Posterior vena cava (tissue), 2 donors: ENCODE measurements at regions of chrX and their contacts with region 1.

Region 1: GRCh38 chrX:17590892-17591740 is 146.2 kb upstream of the SCML1 start:
- DNase-seq: no peak

Region 2: DNA sequence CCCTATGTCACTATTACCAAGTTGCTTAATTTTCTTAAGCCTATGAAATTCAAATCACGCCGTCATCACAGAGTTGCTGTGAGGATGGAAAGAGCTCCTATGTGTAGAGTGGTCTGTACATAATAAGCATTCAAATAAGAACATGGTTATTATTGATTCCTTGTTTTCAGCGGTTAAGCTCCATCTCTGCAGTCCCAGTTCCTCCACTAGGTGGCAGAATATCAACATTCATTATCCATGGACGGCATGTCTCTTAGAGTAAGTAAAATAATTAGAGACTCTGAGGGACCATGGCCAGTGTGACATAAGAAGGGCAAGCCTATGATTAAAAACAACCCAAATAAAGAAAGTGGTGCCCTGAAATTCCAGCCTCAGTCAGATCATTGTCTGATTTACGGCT is 348.6 kb before region 1 on chrX:
- intact Hi-C with region 1: loop called in 1 of 2 experiments (anchors 10 kb)
- DNase-seq: no peak

Region 3: DNA sequence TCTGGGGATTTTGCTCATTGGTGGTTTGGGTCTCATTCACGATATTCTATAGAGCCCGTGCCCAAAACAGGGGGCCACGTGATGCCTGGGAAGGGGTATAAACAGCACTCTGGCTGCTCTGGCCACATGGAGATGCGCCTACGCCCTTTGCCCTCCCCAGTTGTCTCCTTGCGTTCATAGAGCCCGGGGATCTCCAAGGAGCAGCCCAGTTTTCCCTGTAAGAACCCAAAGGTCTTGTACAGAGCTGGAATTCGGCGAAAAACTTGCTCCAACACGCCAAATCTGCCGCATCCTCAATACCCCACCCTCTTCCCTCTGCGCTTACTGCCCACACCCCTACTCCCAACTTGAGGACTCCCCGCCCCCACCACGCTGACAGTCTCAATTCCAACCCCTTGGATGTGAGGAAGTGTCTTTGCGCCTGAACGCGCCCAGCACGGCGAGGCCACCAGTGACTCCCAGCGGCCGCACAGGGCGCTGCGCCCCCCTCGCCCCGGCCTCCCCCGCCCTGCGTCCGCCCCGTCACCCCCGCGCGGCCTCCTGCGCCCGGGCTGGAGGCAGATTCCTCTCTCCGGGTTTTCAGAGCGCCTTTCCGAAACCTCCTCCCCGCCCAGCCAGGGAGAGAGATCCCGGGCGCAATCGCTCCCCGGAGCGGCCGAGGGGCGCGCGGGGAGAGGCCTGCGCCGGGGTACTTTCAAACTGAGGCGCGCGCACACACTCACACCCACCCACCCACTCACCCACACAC is 216.3 kb before region 1 on chrX and contains the start of gene NHS:
- intact Hi-C with region 1: loop called (anchors 5 to 10 kb)
- DNase-seq: peak; percentile 89
- total RNA-seq, gene NHS: 11.1 to 12.2 TPM